PC-3 (cell line): ENCODE measurements at regions of chr20 and their contacts with region 1.

Region 1: GRCh38 chr20:24992487-24993205 is at the start of gene APMAP:
- DNase-seq: peak; percentile 96
- ATAC-seq: peak; percentile 90
- H3K4me3 ChIP-seq: peak within 1 kb of the TSS; percentile 88
- H3K27ac ChIP-seq: peak within 1 kb of the TSS; percentile 55
- H3K4me1 ChIP-seq: peaks cover 50% of the 10 kb centered on the region
- H3K27me3 ChIP-seq: no peaks in the 10 kb centered on the region
- CTCF ChIP-seq: no peak
- total RNA-seq, gene APMAP: 134 and 137 TPM in 2 replicates

Region 2: DNA sequence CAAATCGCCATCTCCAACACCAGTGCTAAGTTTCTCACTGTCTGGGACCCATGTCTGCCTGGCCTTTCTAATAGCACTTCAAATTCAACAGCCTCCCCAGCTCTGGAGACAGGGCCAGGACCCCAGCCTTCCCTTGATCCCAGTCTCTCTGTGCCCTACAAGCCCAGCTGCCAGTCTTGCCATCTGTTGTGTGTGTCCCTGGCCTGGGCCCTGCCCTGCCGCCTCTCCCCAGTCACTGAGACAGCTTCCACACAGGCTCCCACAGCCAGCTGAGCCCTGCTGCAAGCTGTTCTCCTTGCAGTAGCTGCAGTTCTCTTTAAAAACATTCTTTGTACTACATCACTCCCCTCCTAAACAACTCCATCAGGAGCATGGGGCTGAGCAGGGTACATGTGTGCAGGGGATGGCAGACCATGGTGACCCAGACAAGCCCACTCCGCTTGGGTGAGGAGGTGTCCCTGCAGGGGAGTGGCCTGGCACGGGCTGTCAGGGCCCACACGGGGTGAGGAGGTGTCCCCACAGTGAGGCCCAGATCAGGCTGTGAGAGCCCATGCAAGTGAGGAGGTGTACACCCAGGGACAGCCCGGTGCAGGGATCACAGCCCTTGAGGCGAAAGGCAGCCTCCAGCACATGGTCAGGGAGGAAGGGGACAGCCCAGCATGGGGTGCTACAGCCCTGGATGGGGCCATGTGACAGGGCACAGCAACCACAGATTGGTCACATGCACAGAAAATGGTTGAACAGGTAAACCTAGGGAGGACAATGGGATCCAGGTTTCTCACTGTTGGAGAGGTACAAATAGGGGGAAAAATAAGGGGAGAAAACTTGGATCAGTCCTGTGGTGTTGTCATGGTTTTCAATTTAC is 27.3 kb before region 1 on chr20:
- CTCF ChIA-PET with region 1: no interaction called
- POLR2A ChIA-PET with region 1: no interaction called
- intact Hi-C with region 1: no loop called
- DNase-seq: no peak
- ATAC-seq: no peak
- H3K4me3 ChIP-seq: no peak overlapping the region
- H3K27ac ChIP-seq: no peak overlapping the region
- H3K4me1 ChIP-seq: no peaks in the 10 kb centered on the region
- H3K27me3 ChIP-seq: no peaks in the 10 kb centered on the region
- CTCF ChIP-seq: no peak

Region 3: GRCh38 chr20:25057234-25058050 is 64.8 kb after region 1 on chr20:
- CTCF ChIA-PET with region 1: interaction called, 11 read pairs
- POLR2A ChIA-PET with region 1: no interaction called
- intact Hi-C with region 1: loop called (anchors 2 kb)
- DNase-seq: peak; percentile 56
- ATAC-seq: peak; percentile 66
- H3K4me3 ChIP-seq: peak overlapping the region; percentile 86
- H3K27ac ChIP-seq: no peak overlapping the region
- H3K4me1 ChIP-seq: peaks cover 26% of the 10 kb centered on the region
- H3K27me3 ChIP-seq: peaks cover 13% of the 10 kb centered on the region
- CTCF ChIP-seq: no peak

Region 4: GRCh38 chr20:25100914-25101313 is 108.3 kb after region 1 on chr20:
- CTCF ChIA-PET with region 1: no interaction called
- POLR2A ChIA-PET with region 1: no interaction called
- intact Hi-C with region 1: no loop called
- DNase-seq: peak; percentile 47
- ATAC-seq: peak; percentile 38; the same call in 1 of the 2 replicates
- H3K4me3 ChIP-seq: no peak overlapping the region
- H3K27ac ChIP-seq: no peak overlapping the region
- H3K4me1 ChIP-seq: peaks cover 5% of the 10 kb centered on the region; the same call in 1 of the 2 replicates
- H3K27me3 ChIP-seq: peaks cover 22% of the 10 kb centered on the region; the same call in 1 of the 2 replicates
- CTCF ChIP-seq: no peak

Region 5: DNA sequence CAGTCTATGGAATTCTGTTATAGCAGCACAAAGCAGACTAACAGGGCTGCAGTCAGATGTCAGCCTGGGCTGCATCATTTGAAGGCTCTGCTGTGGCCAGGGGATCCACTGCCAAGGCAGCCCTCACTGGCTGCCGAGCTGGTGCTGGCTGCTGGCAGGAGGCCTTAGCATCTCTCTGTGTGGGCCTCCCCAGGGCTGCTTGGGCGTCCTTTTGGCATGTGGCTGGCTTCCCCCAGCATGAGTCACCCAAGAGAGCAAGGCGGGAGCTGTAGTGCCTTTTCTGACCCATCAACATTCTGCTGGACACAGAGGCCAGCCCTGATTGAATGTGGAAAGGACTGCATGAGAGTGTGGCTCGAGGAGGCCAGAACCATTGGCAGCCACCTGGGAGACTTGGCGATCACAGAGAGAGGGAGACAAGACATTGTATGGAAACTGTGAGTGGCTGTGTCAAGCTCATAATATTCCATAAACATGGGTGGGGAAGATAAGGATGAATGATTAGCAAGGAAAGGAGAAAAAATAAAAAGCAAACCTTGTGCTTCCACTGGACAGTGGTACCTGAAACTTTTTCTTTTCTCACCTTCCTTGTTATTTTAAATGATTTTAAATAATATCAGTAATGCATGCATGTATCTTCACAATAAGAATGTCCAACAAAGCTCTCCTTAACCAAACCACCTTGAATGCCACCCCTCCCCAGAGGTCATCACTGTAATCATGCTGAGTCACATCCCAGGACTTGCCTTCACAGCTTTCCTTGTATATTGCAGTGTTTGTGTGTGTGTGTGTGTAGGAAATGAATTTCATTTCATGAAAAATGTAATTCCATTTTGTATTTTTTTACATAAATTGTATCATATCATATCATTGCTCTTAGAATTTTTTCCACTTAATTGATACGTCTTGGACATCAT is 144.3 kb after region 1 on chr20:
- CTCF ChIA-PET with region 1: no interaction called
- POLR2A ChIA-PET with region 1: no interaction called
- intact Hi-C with region 1: loop called (anchors 5 kb)
- DNase-seq: peak; percentile 78
- ATAC-seq: peak; percentile 85
- H3K4me3 ChIP-seq: no peak overlapping the region
- H3K27ac ChIP-seq: no peak overlapping the region
- H3K4me1 ChIP-seq: peaks cover 19% of the 10 kb centered on the region
- H3K27me3 ChIP-seq: no peaks in the 10 kb centered on the region
- CTCF ChIP-seq: no peak

Region 6: DNA sequence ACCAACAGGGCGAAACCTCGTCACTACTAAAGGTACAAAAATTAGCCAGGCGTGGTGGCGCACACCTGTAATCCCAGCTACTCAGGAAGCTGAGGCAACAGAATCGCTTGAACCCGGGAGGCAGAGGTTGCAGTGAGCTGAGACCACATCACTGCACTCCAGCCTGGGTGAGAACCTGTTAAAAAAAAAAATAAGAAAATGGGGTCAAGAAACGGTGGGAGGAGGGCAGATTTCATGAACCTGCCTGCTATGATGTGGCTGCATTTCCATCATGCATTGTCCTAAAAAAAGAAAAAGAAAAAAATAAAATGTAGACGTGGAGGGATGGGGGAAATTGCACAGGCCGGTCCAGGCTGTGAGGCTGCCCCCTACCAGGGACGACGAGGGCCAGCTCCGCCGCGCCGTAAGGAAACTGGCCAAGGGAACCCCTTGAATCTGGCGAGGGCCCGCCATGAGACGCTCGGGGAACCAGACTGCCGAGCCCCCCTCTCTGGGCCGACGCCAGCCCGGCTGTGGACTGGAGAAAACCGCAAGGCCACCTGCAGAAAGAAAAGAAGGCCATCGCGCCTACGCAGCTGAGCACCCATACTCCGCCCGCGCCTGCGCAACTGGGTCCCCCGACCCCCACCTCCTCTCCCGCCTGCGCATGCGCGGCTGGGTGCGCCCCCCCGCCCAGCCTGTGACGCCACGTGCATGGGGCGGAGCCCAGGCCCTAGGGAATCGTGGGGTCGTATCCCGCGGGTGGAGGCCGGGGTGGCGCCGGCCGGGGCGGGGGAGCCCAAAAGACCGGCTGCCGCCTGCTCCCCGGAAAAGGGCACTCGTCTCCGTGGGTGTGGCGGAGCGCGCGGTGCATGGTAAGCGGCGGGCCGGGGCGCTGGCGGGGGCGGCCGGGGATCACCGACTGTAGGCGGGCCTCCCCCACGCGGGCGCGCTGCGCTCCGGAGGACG is 202.6 kb after region 1 on chr20 and contains the start of gene ENTPD6:
- CTCF ChIA-PET with region 1: no interaction called
- POLR2A ChIA-PET with region 1: no interaction called
- intact Hi-C with region 1: loop called (anchors 5 kb)
- DNase-seq: peak; percentile 93
- ATAC-seq: peak; percentile 67
- H3K4me3 ChIP-seq: peak within 1 kb of the TSS; percentile 86
- H3K27ac ChIP-seq: peak within 1 kb of the TSS; percentile 76
- H3K4me1 ChIP-seq: peaks cover 37% of the 10 kb centered on the region
- H3K27me3 ChIP-seq: no peaks in the 10 kb centered on the region
- CTCF ChIP-seq: peak; percentile 41; the same call in 1 of the 2 replicates
- total RNA-seq, gene ENTPD6: 122 and 150 TPM in 2 replicates

Region 7: DNA sequence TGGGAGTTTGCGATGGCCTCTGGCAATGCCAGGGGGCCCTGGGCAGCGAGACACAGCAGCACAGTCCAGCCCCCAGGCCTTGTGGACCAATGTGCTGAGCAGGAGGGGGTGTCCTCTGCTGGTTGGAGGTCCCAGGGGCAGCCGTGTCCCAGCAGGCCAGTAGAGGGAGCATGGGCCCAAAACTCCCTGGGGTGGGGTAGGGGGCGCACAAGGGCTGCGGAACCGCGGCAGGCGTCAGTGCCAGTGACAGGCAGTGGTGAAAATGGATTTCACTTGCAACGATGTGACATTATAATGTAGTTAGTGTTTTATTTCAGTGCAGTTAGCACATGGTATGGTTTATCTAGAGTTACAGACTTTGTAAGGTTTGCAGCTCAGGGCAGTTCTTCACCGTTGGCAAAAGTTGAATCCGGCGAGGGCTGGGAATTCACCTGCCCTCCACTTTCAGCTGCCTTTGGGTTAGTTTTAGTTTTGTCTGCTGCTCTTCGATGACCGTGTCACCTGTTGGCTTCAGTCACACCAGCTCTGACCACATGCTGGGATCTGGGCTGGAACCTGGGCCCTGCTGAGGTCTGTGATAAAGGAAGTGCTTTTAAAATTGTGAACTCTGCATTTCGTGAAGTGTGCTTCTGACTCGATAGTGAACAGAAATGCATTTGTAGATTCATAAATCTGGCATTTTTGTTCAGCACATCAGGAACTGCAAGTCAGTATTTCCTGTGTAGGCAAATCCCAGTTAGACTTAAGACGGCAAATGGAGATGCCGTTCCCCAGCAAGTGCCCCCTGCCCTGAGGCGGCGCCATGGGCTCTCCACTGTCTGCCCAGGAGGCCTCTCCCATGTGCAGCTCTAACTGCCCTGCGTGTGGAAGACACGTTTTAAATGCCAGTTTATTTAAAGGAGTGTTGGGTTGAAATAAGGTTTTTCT is 302.1 kb after region 1 on chr20:
- CTCF ChIA-PET with region 1: no interaction called
- POLR2A ChIA-PET with region 1: no interaction called
- intact Hi-C with region 1: loop called (anchors 10 kb)
- DNase-seq: peak; percentile 49
- ATAC-seq: peak; percentile 39
- H3K4me3 ChIP-seq: no peak overlapping the region
- H3K27ac ChIP-seq: no peak overlapping the region
- H3K4me1 ChIP-seq: peaks cover 4% of the 10 kb centered on the region; the same call in 1 of the 2 replicates
- H3K27me3 ChIP-seq: no peaks in the 10 kb centered on the region
- CTCF ChIP-seq: peak; percentile 98